ENCODE measurements at regions of chr11 and their contacts with region 1.

Region 1: DNA sequence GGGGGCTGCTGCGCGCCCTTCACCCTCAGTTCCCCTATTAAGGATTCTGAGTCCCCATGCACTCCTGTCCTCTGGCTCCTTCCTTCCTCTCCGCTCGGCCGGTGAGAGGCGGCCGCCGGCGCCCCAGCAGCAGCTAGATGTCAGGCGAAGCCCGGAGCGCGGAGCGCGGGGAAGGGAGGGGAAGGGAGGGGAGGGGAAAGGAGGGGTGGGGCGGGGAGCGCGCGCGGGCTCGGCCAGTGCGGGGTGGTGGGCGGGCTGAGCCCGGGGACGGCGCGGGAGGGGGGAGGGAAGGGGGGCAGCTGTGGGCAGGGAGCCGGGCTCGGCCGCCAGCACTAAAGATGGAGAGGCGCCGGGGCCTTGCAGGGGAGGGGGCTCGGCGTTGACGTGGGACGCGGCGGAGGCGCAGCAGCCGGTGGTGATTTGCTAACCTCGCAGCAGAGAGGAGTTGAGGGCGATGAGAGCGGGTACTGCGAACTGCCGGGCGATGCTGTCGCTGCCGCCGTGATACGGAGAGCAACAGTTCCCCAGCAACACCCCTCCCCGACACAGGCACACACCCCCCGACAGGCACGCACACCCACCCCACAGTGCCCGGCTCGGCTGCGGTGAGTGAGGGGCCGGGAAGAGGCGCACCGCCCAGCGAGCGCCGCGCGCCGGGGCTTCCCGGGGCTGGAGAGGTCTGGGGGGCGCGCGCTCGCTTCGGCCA is at the start of gene ZBTB16:
- DNase-seq: peak in 8 of 9 experiments; percentile 50 to 79 (median 64)
- ATAC-seq: peak; percentile 67
- H3K4me3 ChIP-seq: peak within 1 kb of the TSS; percentile 56 to 70
- H3K4me3 Mint-ChIP-seq: peak within 1 kb of the TSS; percentile 89
- H3K27ac ChIP-seq: peak within 1 kb of the TSS in 1 of 2 experiments; percentile 31
- H3K27ac Mint-ChIP-seq: peak within 1 kb of the TSS; percentile 79
- H3K4me1 ChIP-seq: peaks cover 21% of the 10 kb centered on the region
- H3K4me1 Mint-ChIP-seq: peaks cover 9% of the 10 kb centered on the region
- H3K27me3 ChIP-seq: peaks cover 3 to 14% of the 10 kb centered on the region in 2 experiments
- H3K27me3 Mint-ChIP-seq: peaks cover 21% of the 10 kb centered on the region
- CTCF ChIP-seq: no peak
- total RNA-seq, gene ZBTB16: 15.3 to 18.3 TPM

Region 2: GRCh38 chr11:114075891-114076441 is 16.5 kb after region 1 on chr11:
- CTCF ChIA-PET with region 1: interaction called, 4 read pairs
- POLR2A ChIA-PET with region 1: interaction called, 4 read pairs
- intact Hi-C with region 1: loop called (anchors 2 kb)
- DNase-seq: peak in 6 of 9 experiments; percentile 31 to 75 (median 57)
- ATAC-seq: peak; percentile 16
- H3K4me3 ChIP-seq: no peak overlapping the region
- H3K4me3 Mint-ChIP-seq: peak overlapping the region; percentile 40
- H3K27ac ChIP-seq: peak overlapping the region in 1 of 2 experiments; percentile 64
- H3K27ac Mint-ChIP-seq: peak overlapping the region; percentile 38
- H3K4me1 ChIP-seq: peaks cover 48% of the 10 kb centered on the region
- H3K4me1 Mint-ChIP-seq: peaks cover 76% of the 10 kb centered on the region
- H3K27me3 ChIP-seq: no peaks in the 10 kb centered on the region
- H3K27me3 Mint-ChIP-seq: no peaks in the 10 kb centered on the region
- CTCF ChIP-seq: peak; percentile 56

Region 3: DNA sequence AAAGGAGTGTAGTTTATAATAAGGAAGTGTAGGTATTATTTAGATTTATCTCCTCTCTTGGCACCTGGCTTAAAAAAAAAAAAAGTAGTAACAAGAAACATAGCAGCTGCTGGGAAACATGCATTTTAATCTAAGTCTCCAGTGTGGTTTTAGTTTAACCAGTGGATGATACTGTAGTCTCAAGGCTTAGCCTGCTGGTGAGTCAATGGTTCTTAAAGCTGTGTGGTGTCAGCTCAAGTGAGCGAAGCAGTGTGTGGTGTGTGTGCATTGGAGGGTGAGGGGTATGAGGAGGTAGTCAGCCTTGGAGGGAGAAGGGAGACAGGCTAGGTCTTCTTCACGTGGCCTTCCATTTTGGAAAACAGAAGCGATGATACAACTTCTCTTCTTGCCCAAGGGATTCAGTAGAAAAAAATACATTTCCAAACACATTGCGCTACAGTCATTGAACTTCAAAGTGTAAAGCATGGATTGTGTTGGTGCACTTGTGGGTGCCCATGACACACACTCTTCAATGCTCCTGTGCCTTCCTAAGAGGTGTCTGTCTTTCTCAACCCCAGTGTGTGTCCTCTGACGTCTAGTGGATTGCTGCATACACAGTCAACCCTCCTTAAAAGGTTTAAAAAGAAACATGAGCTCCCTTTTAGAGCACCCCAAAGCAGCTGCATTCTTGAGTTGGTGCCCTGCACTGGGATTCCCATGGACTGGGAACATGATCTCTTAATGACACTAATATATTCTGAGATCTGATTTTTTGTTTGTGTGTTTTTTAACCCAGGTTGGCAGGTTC is 40.2 kb after region 1 on chr11:
- CTCF ChIA-PET with region 1: no interaction called
- POLR2A ChIA-PET with region 1: interaction called, 3 read pairs
- intact Hi-C with region 1: loop called in 1 of 2 experiments (anchors 5 kb)
- DNase-seq: peak in 1 of 9 experiments; percentile 16
- ATAC-seq: peak; percentile 67
- H3K4me3 ChIP-seq: no peak overlapping the region
- H3K4me3 Mint-ChIP-seq: no peak overlapping the region
- H3K27ac ChIP-seq: no peak overlapping the region
- H3K27ac Mint-ChIP-seq: peak overlapping the region; percentile 49
- H3K4me1 ChIP-seq: peaks cover 20% of the 10 kb centered on the region
- H3K4me1 Mint-ChIP-seq: peaks cover 50% of the 10 kb centered on the region
- H3K27me3 ChIP-seq: no peaks in the 10 kb centered on the region
- H3K27me3 Mint-ChIP-seq: no peaks in the 10 kb centered on the region
- CTCF ChIP-seq: no peak

Region 4: DNA sequence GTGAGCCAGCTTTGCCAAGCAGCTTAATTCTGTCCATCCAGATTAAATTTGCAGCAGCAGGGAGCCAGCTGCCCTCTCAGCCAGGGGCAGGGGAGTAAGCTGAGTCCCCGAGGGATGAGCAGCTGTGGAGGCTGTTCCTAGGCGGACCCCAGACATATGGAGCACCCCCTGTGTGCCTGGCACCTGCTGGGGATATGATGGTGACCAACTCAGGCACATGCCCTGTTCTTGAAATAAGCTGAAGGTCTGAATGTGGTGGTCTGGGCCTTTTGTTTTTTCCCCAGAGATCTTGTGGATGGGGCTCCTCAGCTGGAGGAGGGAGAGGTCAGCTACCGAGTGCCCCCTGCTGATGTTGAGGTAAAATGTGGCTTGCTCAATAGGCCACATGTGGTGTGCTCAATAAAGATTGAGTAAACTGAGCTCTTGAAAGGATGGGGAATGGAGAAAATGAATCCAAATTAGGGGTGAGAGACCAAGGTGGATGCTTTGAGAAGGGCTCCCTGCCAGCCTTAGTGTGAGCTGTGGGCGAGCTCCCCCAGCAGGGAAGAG is 133.5 kb after region 1 on chr11:
- CTCF ChIA-PET with region 1: interaction called, 19 read pairs
- POLR2A ChIA-PET with region 1: interaction called, 3 read pairs
- intact Hi-C with region 1: loop called in 1 of 2 experiments (anchors 1 kb)
- DNase-seq: peak in 2 of 9 experiments; percentile 24 to 31
- ATAC-seq: no peak
- H3K4me3 ChIP-seq: no peak overlapping the region
- H3K4me3 Mint-ChIP-seq: no peak overlapping the region
- H3K27ac ChIP-seq: no peak overlapping the region
- H3K27ac Mint-ChIP-seq: no peak overlapping the region
- H3K4me1 ChIP-seq: no peaks in the 10 kb centered on the region
- H3K4me1 Mint-ChIP-seq: peaks cover 44% of the 10 kb centered on the region
- H3K27me3 ChIP-seq: no peaks in the 10 kb centered on the region
- H3K27me3 Mint-ChIP-seq: no peaks in the 10 kb centered on the region
- CTCF ChIP-seq: no peak

Region 5: DNA sequence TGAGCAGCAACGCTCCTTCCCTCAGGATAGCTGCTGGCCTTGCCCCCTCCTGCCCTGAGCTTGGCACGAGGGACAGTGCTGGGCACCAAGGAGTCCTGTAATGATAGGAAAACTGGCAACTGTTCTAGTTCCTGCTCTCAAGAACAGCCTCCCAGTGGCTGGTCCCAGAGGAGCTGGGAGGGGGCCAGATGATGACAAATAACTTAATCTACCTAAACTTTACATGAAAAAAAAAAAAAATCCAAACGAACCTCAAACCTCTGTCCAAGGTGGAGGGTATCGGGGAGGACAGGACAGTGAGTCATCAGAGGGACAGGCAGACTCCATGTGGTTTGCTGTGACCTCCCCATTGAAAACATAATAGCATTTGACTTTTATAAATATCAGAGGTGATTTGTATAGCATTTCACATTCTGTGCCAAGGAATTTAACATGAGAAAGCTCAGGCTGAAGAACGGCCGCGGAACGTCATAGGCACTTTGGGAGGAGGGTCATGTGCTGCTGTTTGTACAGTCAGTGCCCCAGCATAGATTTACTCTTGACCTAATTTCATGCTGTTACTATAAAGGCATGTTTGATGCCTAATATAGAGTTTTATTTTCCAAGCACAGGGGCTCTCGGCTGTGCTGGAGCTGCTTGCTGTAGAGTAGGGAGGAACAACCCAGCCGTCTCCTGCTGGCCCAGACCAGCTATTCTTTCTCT is 138.5 kb after region 1 on chr11:
- CTCF ChIA-PET with region 1: interaction called, 19 read pairs
- POLR2A ChIA-PET with region 1: interaction called, 3 read pairs
- intact Hi-C with region 1: loop called in 1 of 2 experiments (anchors 1 kb)
- DNase-seq: no peak
- ATAC-seq: no peak
- H3K4me3 ChIP-seq: no peak overlapping the region
- H3K4me3 Mint-ChIP-seq: no peak overlapping the region
- H3K27ac ChIP-seq: no peak overlapping the region
- H3K27ac Mint-ChIP-seq: peak overlapping the region; percentile 22
- H3K4me1 ChIP-seq: no peaks in the 10 kb centered on the region
- H3K4me1 Mint-ChIP-seq: peaks cover 24% of the 10 kb centered on the region
- H3K27me3 ChIP-seq: no peaks in the 10 kb centered on the region
- H3K27me3 Mint-ChIP-seq: no peaks in the 10 kb centered on the region
- CTCF ChIP-seq: no peak

Measured in CD8-positive, alpha-beta T cell (primary cell).